ENCODE measurements at regions of chr1 and their contacts with region 1.

Region 1: DNA sequence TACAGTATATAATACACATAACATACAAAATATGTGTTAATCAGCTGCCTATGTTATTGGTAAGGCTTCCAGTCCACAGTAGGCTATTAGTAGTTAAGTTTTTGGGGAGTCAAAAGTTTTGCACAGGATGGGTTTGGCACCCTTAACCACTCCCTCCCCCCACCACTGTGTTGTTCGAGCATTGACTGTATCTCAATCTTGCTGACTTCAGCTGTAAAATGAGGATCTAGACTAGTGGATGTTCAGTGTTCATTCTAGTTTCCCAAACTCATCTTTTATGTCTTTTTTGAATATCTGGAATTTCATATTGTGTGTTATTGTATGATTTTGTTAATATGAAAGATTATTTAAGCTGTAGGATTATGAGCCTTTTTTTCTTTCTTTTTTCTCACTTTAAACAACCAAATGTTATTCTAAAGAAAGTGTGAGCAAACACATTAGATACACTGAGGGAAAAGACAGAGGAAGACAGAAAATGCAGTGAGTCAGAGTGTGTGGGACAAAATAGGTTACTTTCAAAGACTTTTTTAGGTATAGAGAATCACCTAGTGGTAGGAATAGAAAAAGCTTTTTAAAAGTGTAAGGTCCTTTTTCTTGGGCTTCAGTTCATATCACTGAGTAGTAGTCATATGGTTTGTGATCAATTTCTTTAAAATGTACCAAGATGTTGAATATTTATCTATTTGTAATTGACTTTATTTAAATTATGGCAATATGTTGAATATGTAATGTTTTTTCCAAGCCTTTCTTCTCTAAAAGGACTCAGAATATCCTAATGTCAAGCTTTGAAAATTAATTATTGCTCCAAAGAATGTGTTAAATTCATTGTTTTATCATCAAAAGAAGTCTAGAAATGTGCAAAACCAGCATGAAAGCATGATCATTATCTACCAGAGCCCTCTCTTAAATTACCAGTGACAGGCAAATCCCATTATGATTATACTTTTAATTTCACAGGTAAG is 17.9 kb upstream of the CENPF start:
- DNase-seq: no peak
- H3K4me3 ChIP-seq: no peak overlapping the region
- H3K27ac ChIP-seq: no peak overlapping the region
- H3K4me1 ChIP-seq: no peaks in the 10 kb centered on the region
- H3K27me3 ChIP-seq: no peaks in the 10 kb centered on the region
- CTCF ChIP-seq: peak; percentile 61 to 72 (median 66)
- EP300 ChIP-seq: no peak
- POLR2A ChIP-seq: no peak

Region 2: GRCh38 chr1:214224611-214225354 is 360.3 kb before region 1 on chr1:
- in situ Hi-C with region 1: loop called in 1 of 4 experiments (anchors 25 kb)
- intact Hi-C with region 1: no loop called
- DNase-seq: no peak
- H3K4me3 ChIP-seq: peak overlapping the region in 2 of 4 donors; percentile 22 to 26
- H3K27ac ChIP-seq: no peak overlapping the region
- H3K4me1 ChIP-seq: peaks cover 0 to 9% (median 0%) of the 10 kb centered on the region in 4 donors
- H3K27me3 ChIP-seq: peaks cover 8% of the 10 kb centered on the region
- CTCF ChIP-seq: no peak
- EP300 ChIP-seq: no peak
- POLR2A ChIP-seq: no peak

Region 3: DNA sequence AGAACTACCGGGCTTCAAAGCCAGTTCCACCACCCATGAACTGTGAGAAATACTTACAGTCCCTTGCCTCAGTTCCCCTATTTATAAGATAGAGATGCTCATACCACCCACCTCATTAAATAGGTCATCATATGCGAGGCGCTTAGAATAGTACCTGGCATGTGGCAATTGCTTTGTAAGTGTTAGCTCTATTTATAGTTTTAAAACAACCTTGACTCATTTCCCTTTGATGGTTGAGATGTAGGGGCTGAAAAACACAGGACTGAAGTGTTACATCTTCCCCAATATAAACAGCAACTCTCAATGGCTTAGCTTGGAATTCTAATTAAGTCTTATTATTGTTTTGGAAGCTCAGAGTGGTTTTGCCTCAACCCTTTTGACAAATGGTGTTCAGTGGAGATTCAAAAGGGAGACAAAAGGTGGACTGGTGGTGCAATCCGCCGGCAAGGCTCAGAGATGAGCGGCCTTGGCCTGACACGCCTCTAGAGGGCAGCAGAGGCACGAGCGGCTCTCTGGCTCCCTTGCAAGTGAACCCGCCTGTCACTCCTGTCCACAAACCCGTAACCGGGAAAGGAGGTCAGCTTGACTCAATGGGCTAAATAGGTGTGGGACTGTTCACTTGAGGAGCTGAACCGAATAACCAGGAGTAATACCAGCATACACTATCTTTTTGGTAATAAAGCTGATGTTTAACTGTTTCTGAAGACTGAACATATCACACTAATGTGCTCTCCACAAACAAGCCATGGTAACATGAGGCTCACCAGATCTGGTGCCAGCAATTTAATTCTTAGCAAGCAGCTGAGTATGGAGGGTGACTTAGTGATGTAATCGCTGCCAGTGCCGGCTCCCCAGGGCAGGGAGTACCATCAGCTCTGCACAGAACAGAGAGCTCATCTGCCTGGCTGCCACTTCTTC is 323.6 kb before region 1 on chr1:
- in situ Hi-C with region 1: loop called in 1 of 4 experiments (anchors 25 kb)
- intact Hi-C with region 1: no loop called
- DNase-seq: peak; percentile 83
- H3K4me3 ChIP-seq: no peak overlapping the region
- H3K27ac ChIP-seq: no peak overlapping the region
- H3K4me1 ChIP-seq: no peaks in the 10 kb centered on the region
- H3K27me3 ChIP-seq: peaks cover 60% of the 10 kb centered on the region
- CTCF ChIP-seq: peak; percentile 67 to 95 (median 89)
- EP300 ChIP-seq: no peak
- POLR2A ChIP-seq: no peak

Region 4: DNA sequence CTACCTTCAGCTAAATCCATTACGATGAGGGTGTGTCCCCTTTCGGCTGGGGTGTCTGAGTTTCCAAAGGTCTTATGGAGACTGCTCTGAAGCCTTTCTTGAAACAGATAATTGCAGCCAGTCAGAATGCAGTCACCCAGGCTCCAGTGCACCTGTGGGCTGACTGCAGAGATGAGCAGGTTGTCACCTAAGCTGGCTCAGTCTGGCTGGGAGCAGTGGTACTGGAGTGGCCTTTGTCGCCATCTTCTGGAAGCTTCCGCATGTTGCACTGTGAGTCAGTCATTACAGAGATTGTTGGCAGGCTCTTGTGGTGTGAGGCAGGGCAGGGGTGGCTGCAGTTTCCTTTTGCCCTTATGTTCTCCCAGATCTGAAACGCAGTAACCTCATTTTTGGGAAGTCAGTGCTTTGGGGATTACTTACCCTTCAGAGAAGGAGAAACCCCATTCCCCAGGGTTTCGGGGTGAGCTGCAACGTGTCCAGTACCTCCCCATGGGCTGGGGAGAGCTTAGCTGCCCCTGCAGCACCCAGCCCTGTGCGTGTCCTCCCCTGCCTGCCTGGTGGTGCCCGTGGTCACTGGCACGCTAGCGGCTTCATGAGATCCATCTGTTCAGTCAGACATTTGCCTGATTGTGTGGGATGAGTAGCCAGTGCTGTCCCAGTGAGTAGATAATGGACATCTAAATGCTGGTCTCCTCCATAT is 256.2 kb before region 1 on chr1:
- in situ Hi-C with region 1: loop called in 3 of 4 experiments (anchors 10 to 25 kb)
- intact Hi-C with region 1: loop called (anchors 5 kb)
- DNase-seq: peak; percentile 83
- H3K4me3 ChIP-seq: no peak overlapping the region
- H3K27ac ChIP-seq: no peak overlapping the region
- H3K4me1 ChIP-seq: peaks cover 0 to 3% (median 0%) of the 10 kb centered on the region in 4 donors
- H3K27me3 ChIP-seq: no peaks in the 10 kb centered on the region
- CTCF ChIP-seq: peak; percentile 82 to 91 (median 88)
- EP300 ChIP-seq: no peak
- POLR2A ChIP-seq: no peak